ENCODE measurements at regions of chr1 and their contacts with region 1.

Region 1: DNA sequence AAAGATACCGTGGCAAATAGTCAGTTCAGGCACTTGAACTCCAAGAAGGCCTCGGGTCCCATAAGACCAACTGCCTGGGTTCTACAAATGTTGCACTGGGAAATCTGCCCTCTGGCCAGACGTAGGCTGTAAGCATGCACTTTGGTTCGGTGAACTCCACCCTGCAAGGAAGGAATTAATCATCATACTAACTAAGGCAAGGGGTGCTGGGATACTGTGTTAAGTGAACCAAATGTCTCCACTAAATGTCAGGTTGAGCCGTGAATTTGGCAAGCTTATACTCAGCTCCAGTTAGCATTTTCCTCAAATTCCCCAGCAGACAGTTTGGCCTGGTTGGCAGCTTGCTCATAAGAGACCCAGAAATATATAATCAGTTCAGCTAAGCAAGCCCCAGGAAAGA is 385.9 kb downstream of the GPATCH2 start:
- DNase-seq: no peak
- ATAC-seq: no peak
- H3K4me3 ChIP-seq: no peak overlapping the region
- H3K27ac ChIP-seq: no peak overlapping the region
- H3K4me1 ChIP-seq: no peaks in the 10 kb centered on the region
- H3K27me3 ChIP-seq: no peaks in the 10 kb centered on the region
- CTCF ChIP-seq: no peak
- EP300 ChIP-seq: no peak
- POLR2A ChIP-seq: no peak
- RAD21 ChIP-seq: no peak

Region 2: GRCh38 chr1:216883518-216883917 is 361.5 kb before region 1 on chr1:
- CTCF ChIA-PET with region 1: no interaction called
- POLR2A ChIA-PET with region 1: no interaction called
- RAD21 ChIA-PET with region 1: no interaction called
- SMC1A ChIA-PET with region 1: no interaction called
- in situ Hi-C with region 1: no loop called
- intact Hi-C with region 1: no loop called
- DNase-seq: no peak
- ATAC-seq: no peak
- H3K4me3 ChIP-seq: no peak overlapping the region
- H3K27ac ChIP-seq: no peak overlapping the region
- H3K4me1 ChIP-seq: no peaks in the 10 kb centered on the region
- H3K27me3 ChIP-seq: no peaks in the 10 kb centered on the region
- CTCF ChIP-seq: no peak
- EP300 ChIP-seq: no peak
- POLR2A ChIP-seq: no peak
- RAD21 ChIP-seq: no peak

Region 3: GRCh38 chr1:217188280-217189237 is 56.4 kb before region 1 on chr1:
- CTCF ChIA-PET with region 1: no interaction called
- POLR2A ChIA-PET with region 1: no interaction called
- RAD21 ChIA-PET with region 1: no interaction called
- SMC1A ChIA-PET with region 1: no interaction called
- in situ Hi-C with region 1: no loop called
- intact Hi-C with region 1: loop called (anchors 10 kb)
- DNase-seq: no peak
- ATAC-seq: no peak
- H3K4me3 ChIP-seq: no peak overlapping the region
- H3K27ac ChIP-seq: no peak overlapping the region
- H3K4me1 ChIP-seq: no peaks in the 10 kb centered on the region
- H3K27me3 ChIP-seq: no peaks in the 10 kb centered on the region
- CTCF ChIP-seq: no peak
- EP300 ChIP-seq: no peak
- POLR2A ChIP-seq: no peak
- RAD21 ChIP-seq: no peak

Region 4: GRCh38 chr1:217281348-217281747 is 36.4 kb after region 1 on chr1:
- CTCF ChIA-PET with region 1: no interaction called
- POLR2A ChIA-PET with region 1: no interaction called
- RAD21 ChIA-PET with region 1: no interaction called
- SMC1A ChIA-PET with region 1: no interaction called
- in situ Hi-C with region 1: no loop called
- intact Hi-C with region 1: no loop called
- DNase-seq: no peak
- ATAC-seq: no peak
- H3K4me3 ChIP-seq: no peak overlapping the region
- H3K27ac ChIP-seq: no peak overlapping the region
- H3K4me1 ChIP-seq: no peaks in the 10 kb centered on the region
- H3K27me3 ChIP-seq: no peaks in the 10 kb centered on the region
- CTCF ChIP-seq: no peak
- EP300 ChIP-seq: no peak
- POLR2A ChIP-seq: no peak
- RAD21 ChIP-seq: no peak

Region 5: GRCh38 chr1:217687509-217687908 is 442.5 kb after region 1 on chr1:
- CTCF ChIA-PET with region 1: no interaction called
- POLR2A ChIA-PET with region 1: no interaction called
- RAD21 ChIA-PET with region 1: no interaction called
- SMC1A ChIA-PET with region 1: no interaction called
- in situ Hi-C with region 1: no loop called
- intact Hi-C with region 1: no loop called
- DNase-seq: no peak
- ATAC-seq: no peak
- H3K4me3 ChIP-seq: no peak overlapping the region
- H3K27ac ChIP-seq: no peak overlapping the region
- H3K4me1 ChIP-seq: no peaks in the 10 kb centered on the region
- H3K27me3 ChIP-seq: no peaks in the 10 kb centered on the region
- CTCF ChIP-seq: no peak
- EP300 ChIP-seq: no peak
- POLR2A ChIP-seq: no peak
- RAD21 ChIP-seq: no peak